ENCODE measurements at regions of chr22 and their contacts with region 1.

Region 1: GRCh38 chr22:40044102-40044869 is 49.5 kb downstream of the FAM83F start:
- DNase-seq: peak; percentile 96 to 99 (median 96)
- ATAC-seq: peak; percentile 95
- H3K4me3 ChIP-seq: peak overlapping the region; percentile 52
- H3K27ac ChIP-seq: peak overlapping the region; percentile 94
- H3K4me1 ChIP-seq: peaks cover 12 to 46% of the 10 kb centered on the region in 2 experiments
- H3K27me3 ChIP-seq: no peaks in the 10 kb centered on the region
- CTCF ChIP-seq: no peak
- EP300 ChIP-seq: peak; percentile 6; the same call in 1 of the 2 replicates
- POLR2A ChIP-seq: peak; percentile 92
- RAD21 ChIP-seq: no peak

Region 2: GRCh38 chr22:40055143-40055883 is 11.0 kb after region 1 on chr22:
- CTCF ChIA-PET with region 1: no interaction called
- POLR2A ChIA-PET with region 1: interaction called, 25 read pairs
- in situ Hi-C with region 1: no loop called
- intact Hi-C with region 1: no loop called
- DNase-seq: peak; percentile 20 to 69 (median 34)
- ATAC-seq: peak; percentile 64
- H3K4me3 ChIP-seq: no peak overlapping the region
- H3K27ac ChIP-seq: peak overlapping the region; percentile 66
- H3K4me1 ChIP-seq: peaks cover 19 to 46% of the 10 kb centered on the region in 2 experiments
- H3K27me3 ChIP-seq: no peaks in the 10 kb centered on the region
- CTCF ChIP-seq: no peak
- EP300 ChIP-seq: peak; percentile 87
- POLR2A ChIP-seq: no peak
- RAD21 ChIP-seq: no peak

Region 3: GRCh38 chr22:40177738-40178416 is 133.6 kb after region 1 on chr22 and contains the start of gene TNRC6B:
- CTCF ChIA-PET with region 1: no interaction called
- POLR2A ChIA-PET with region 1: interaction called, 11 read pairs
- in situ Hi-C with region 1: loop called (anchors 10 kb)
- intact Hi-C with region 1: loop called (anchors 5 kb)
- DNase-seq: peak; percentile 60 to 94 (median 70)
- ATAC-seq: peak; percentile 83
- H3K4me3 ChIP-seq: peak within 1 kb of the TSS; percentile 68
- H3K27ac ChIP-seq: peak within 1 kb of the TSS; percentile 93
- H3K4me1 ChIP-seq: peaks cover 9 to 24% of the 10 kb centered on the region in 2 experiments; a peak in 4 of 5 replicates
- H3K27me3 ChIP-seq: no peaks in the 10 kb centered on the region
- CTCF ChIP-seq: 0 out of 6 replicates have a peak, but pooled peaks of 1 of the 3 experiments have one; percentile 4
- EP300 ChIP-seq: peak; percentile 63
- POLR2A ChIP-seq: peak; percentile 95
- RAD21 ChIP-seq: no peak
- polyA plus RNA-seq, gene TNRC6B: 0.96 to 14.7 TPM

Region 4: GRCh38 chr22:40183029-40183581 is 138.8 kb after region 1 on chr22:
- CTCF ChIA-PET with region 1: no interaction called
- POLR2A ChIA-PET with region 1: interaction called, 11 read pairs
- in situ Hi-C with region 1: loop called (anchors 10 kb)
- intact Hi-C with region 1: loop called (anchors 5 kb)
- DNase-seq: peak in 1 of 4 experiments; percentile 35
- ATAC-seq: peak; percentile 23
- H3K4me3 ChIP-seq: peak overlapping the region; percentile 9; the same call in 1 of the 2 replicates
- H3K27ac ChIP-seq: peak overlapping the region; percentile 74
- H3K4me1 ChIP-seq: peaks cover 11 to 49% of the 10 kb centered on the region in 2 experiments; a peak in 4 of 5 replicates
- H3K27me3 ChIP-seq: no peaks in the 10 kb centered on the region
- CTCF ChIP-seq: no peak
- EP300 ChIP-seq: no peak
- POLR2A ChIP-seq: no peak
- RAD21 ChIP-seq: no peak

Region 5: DNA sequence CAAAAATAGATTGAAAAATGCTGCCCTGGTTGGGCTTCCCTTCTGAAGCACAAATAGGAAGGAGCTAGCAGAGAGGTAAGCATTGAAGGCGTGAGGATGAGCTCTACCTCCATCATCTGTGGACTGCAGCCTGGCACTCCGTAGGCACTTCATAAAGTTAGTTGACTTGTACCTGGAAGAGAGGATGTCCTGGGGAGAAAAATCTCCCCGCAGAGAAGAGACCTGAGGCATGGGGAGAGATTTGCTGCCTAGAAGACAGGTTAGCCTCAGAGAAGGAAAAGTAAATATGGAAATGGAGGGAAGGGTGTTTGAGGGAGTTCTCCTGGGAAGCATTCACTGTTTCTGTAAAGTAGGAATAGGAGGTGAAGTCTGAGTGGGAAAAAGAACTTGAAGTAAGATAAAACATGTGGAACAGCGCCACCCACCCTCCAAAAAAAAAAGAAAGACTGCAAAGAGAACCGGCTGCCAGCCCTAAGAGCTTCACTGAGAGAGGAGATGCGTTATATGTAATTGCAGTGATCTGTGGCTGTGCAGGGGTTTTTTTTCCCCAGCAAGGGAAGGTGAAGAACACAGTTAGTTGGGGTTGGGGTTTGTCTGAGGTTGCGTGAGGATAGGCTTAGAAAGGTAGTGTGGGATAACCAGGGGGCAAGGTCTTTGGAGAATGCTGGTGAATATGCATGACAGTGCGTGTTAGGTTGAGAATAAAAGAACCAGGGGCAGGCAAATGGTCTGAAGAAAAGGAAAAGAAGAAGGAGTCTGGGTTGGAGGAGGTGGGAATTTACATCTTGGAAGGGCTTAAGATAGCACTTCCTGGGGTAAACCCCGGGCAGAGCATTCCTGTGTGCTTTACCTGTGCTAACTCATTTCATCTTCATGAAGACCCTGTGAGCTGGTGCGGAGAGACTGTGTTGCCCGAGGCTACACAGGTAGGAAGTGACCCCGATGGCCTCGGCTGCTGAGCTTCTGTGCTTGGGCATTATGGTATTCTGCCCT is 149.4 kb after region 1 on chr22:
- CTCF ChIA-PET with region 1: no interaction called
- POLR2A ChIA-PET with region 1: interaction called, 4 read pairs
- in situ Hi-C with region 1: loop called (anchors 10 kb)
- intact Hi-C with region 1: loop called (anchors 5 kb)
- DNase-seq: peak in 1 of 4 experiments; percentile 52
- ATAC-seq: 0 out of 3 replicates have a peak, but pooled peaks have one; percentile 17
- H3K4me3 ChIP-seq: no peak overlapping the region
- H3K27ac ChIP-seq: no peak overlapping the region
- H3K4me1 ChIP-seq: peaks cover 29 to 50% of the 10 kb centered on the region in 2 experiments
- H3K27me3 ChIP-seq: no peaks in the 10 kb centered on the region
- CTCF ChIP-seq: peak; percentile 33 to 59 (median 54); a peak in 4 of 6 replicates
- EP300 ChIP-seq: no peak
- POLR2A ChIP-seq: no peak
- RAD21 ChIP-seq: peak; percentile 13 to 52; a peak in 3 of 4 replicates

Region 6: DNA sequence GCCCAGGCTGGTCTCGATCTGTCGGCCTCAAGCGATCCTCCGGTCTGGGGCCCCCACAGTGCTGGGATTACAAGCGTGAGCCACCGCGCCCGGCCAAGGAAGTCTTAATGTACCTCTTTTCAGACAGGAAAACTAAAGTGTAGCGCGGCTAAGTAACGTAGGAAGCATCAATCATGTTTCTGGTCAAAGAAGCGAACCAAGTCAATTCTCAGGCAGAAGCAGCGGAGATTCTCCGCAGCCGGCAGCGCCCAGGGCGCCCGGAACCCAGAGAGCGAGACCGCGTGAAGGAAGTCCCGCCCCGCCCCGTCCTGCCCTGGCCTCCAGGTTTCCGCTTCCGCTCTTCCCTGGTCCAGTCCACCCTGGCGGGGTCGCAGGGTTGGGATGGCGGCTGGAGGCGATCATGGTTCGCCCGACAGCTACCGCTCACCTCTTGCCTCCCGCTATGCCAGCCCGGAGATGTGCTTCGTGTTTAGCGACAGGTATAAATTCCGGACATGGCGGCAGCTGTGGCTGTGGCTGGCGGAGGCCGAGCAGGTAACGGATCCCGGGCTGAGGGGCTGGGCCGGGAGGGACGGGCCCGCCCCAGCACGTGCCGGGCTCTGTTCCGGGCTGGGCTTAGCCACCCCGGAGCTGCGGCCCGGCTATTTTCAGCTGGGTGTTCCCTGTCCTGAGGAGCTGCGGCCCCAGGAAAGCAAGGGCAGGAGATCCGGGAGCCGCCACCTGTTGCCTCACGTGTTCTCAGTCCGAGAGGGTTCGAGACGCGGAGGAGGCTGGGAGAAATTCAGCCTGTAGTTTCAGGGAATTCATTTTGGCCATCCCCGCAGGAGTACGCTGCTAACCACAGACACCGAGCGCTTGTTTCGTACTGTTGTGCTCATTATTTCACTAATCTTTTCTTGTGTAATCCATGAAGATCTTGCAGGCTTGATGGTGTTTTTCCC is 302.2 kb after region 1 on chr22 and contains the start of gene ADSL:
- CTCF ChIA-PET with region 1: interaction called, 6 read pairs
- POLR2A ChIA-PET with region 1: interaction called, 3 read pairs
- in situ Hi-C with region 1: loop called (anchors 5 kb)
- intact Hi-C with region 1: loop called (anchors 5 kb)
- DNase-seq: peak; percentile 84 to 91 (median 86)
- ATAC-seq: peak; percentile 97
- H3K4me3 ChIP-seq: peak within 1 kb of the TSS; percentile 73
- H3K27ac ChIP-seq: peak within 1 kb of the TSS; percentile 76
- H3K4me1 ChIP-seq: peaks cover 5 to 11% of the 10 kb centered on the region in 2 experiments
- H3K27me3 ChIP-seq: no peaks in the 10 kb centered on the region
- CTCF ChIP-seq: peak in 2 of 3 experiments; percentile 2 to 11; a peak in 2 of 6 replicates
- EP300 ChIP-seq: no peak; the same call in 1 of the 2 replicates
- POLR2A ChIP-seq: peak; percentile 96
- RAD21 ChIP-seq: no peak
- polyA plus RNA-seq, gene ADSL: 278 to 322 TPM

Region 7: GRCh38 chr22:40352763-40353162 is 308.5 kb after region 1 on chr22:
- CTCF ChIA-PET with region 1: interaction called, 6 read pairs
- POLR2A ChIA-PET with region 1: interaction called, 4 read pairs
- in situ Hi-C with region 1: loop called (anchors 5 kb)
- intact Hi-C with region 1: loop called (anchors 5 kb)
- DNase-seq: no peak
- ATAC-seq: no peak
- H3K4me3 ChIP-seq: no peak overlapping the region
- H3K27ac ChIP-seq: no peak overlapping the region
- H3K4me1 ChIP-seq: peaks cover 0 to 2% of the 10 kb centered on the region in 2 experiments; a peak in 3 of 5 replicates
- H3K27me3 ChIP-seq: no peaks in the 10 kb centered on the region
- CTCF ChIP-seq: no peak
- EP300 ChIP-seq: no peak
- POLR2A ChIP-seq: no peak
- RAD21 ChIP-seq: no peak

Measured in K562 (cell line).